ENCODE measurements at regions of chr6 and their contacts with region 1.

Region 1: GRCh38 chr6:166786704-166787293 is 159.7 kb upstream of the RPS6KA2 start:
- DNase-seq: no peak
- H3K4me3 Mint-ChIP-seq: no peak overlapping the region
- H3K27ac Mint-ChIP-seq: no peak overlapping the region
- H3K4me1 Mint-ChIP-seq: no peaks in the 10 kb centered on the region
- H3K27me3 Mint-ChIP-seq: peaks cover 11% of the 10 kb centered on the region

Region 2: GRCh38 chr6:166830185-166830890 is 43.5 kb after region 1 on chr6:
- intact Hi-C with region 1: loop called (anchors 1 kb)
- DNase-seq: no peak
- H3K4me3 Mint-ChIP-seq: no peak overlapping the region
- H3K27ac Mint-ChIP-seq: peak overlapping the region; percentile 76
- H3K4me1 Mint-ChIP-seq: peaks cover 20% of the 10 kb centered on the region
- H3K27me3 Mint-ChIP-seq: peaks cover 4% of the 10 kb centered on the region

Region 3: DNA sequence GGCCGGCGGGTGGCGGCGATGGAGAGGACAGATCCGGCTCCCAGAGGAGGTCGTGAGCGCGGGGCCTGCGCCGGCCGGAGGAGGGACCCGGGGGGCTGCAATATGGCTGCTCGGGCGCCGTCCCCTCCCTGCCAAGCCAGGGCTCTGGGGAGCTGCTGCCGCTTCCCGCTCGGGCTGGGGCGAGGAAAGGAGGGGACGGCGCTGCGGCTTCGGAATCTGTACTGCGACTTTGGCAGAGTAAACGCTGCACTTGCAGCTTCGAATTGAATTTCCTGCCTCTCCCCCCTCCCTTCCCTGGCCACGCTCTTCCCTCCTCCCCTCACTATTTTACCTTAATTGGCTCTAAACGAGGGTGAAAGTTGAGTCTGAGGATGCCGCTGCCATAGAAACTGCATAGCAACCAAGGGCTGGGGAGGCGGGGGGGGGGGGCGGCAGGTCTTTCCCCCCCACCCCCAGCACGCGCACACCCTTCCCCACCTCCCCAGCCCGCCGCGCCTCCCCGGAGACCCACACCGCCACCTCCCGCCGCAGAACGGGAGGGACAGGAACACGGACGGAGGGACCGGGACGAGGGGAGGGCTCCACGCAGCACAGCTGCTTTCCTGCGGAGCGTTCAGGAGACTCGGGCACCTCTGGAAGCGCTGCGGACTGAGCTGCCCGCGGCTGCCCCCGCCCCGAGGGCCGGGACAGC is 75.6 kb after region 1 on chr6:
- intact Hi-C with region 1: loop called (anchors 5 kb)
- DNase-seq: no peak
- H3K4me3 Mint-ChIP-seq: peak overlapping the region; percentile 77
- H3K27ac Mint-ChIP-seq: no peak overlapping the region
- H3K4me1 Mint-ChIP-seq: peaks cover 7% of the 10 kb centered on the region
- H3K27me3 Mint-ChIP-seq: peaks cover 39% of the 10 kb centered on the region

Region 4: GRCh38 chr6:166989427-166990032 is 202.7 kb after region 1 on chr6:
- intact Hi-C with region 1: loop called (anchors 1 kb)
- DNase-seq: peak; percentile 36
- H3K4me3 Mint-ChIP-seq: no peak overlapping the region
- H3K27ac Mint-ChIP-seq: no peak overlapping the region
- H3K4me1 Mint-ChIP-seq: peaks cover 26% of the 10 kb centered on the region
- H3K27me3 Mint-ChIP-seq: no peaks in the 10 kb centered on the region

Region 5: DNA sequence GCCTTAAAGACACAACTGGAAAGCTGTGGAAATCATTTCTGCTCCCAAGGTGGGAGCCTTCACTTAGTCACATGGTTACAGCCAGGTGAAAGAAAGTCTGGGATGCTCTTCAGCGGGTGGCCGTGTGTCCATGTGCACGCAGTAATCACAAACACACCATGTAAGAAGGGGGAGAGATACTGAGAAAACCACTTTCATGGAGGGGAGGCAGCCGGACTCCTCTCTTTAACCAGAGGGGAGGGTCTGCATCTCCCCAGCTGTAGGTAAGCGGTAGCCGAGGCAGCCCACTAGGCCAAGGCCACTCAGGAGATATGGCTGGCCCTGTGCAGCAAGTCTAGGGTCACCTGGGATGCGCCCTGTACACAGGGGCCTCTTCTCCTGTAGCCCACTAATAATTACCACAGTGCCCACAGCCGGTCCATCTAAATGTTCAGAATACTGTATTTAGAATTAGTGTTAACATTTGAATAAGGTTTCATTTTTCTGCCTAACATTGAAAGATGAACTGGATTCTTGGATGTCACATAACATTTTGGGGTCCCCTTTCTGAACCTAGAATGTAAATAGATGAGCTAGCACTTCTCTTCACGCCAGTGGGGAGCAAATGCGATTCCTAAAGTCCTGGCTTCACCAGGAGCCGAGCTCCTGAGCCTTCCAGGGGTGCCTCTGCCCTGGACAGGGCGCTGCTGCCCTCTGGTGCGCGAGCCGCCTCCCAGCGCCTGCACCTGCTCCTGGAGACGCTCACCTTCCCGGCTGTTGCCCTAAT is 355.1 kb after region 1 on chr6:
- intact Hi-C with region 1: loop called (anchors 5 kb)
- DNase-seq: peak; percentile 12
- H3K4me3 Mint-ChIP-seq: no peak overlapping the region
- H3K27ac Mint-ChIP-seq: no peak overlapping the region
- H3K4me1 Mint-ChIP-seq: no peaks in the 10 kb centered on the region
- H3K27me3 Mint-ChIP-seq: peaks cover 28% of the 10 kb centered on the region

Measured in activated T-helper 2 cell treated with anti-CD3 and anti-CD28 coated beads, Interferon-gamma antibody, Interleukin-2, Interleukin-4, amounts not matched to agents 10 μg/mL and 5 μg/mL and 100 μg/mL, durations not matched to agents 14 hours and 24 hours and 36 hours (primary cell).